ENCODE measurements at regions of chr13 and their contacts with region 1.

Region 1: GRCh38 chr13:33017323-33017929 is 1.2 kb downstream of the KL start:
- DNase-seq: peak; percentile 65
- ATAC-seq: peak; percentile 88
- H3K4me3 ChIP-seq: peak overlapping the region; percentile 69
- H3K27ac ChIP-seq: no peak overlapping the region
- H3K4me1 ChIP-seq: peaks cover 12% of the 10 kb centered on the region
- H3K27me3 ChIP-seq: peaks cover 0 to 6% of the 10 kb centered on the region in 2 experiments; a peak in 1 of 4 replicates
- CTCF ChIP-seq: peak; percentile 66 to 82 (median 74); a peak in 5 of 6 replicates
- EP300 ChIP-seq: peak in 1 of 2 experiments; percentile 24; a peak in 1 of 4 replicates
- POLR2A ChIP-seq: no peak
- RAD21 ChIP-seq: peak; percentile 83

Region 2: GRCh38 chr13:32824671-32825070 is 192.8 kb before region 1 on chr13:
- CTCF ChIA-PET with region 1: interaction called, 4 read pairs
- POLR2A ChIA-PET with region 1: no interaction called
- RAD21 ChIA-PET with region 1: interaction called, 4 read pairs
- SMC1A ChIA-PET with region 1: no interaction called
- in situ Hi-C with region 1: no loop called
- intact Hi-C with region 1: loop called (anchors 1 kb)
- DNase-seq: no peak
- ATAC-seq: no peak
- H3K4me3 ChIP-seq: no peak overlapping the region
- H3K27ac ChIP-seq: no peak overlapping the region
- H3K4me1 ChIP-seq: peaks cover 12% of the 10 kb centered on the region
- H3K27me3 ChIP-seq: no peaks in the 10 kb centered on the region
- CTCF ChIP-seq: no peak
- EP300 ChIP-seq: no peak
- POLR2A ChIP-seq: no peak
- RAD21 ChIP-seq: no peak

Region 3: GRCh38 chr13:32838945-32839344 is 178.5 kb before region 1 on chr13:
- CTCF ChIA-PET with region 1: no interaction called
- POLR2A ChIA-PET with region 1: no interaction called
- RAD21 ChIA-PET with region 1: interaction called, 4 read pairs
- SMC1A ChIA-PET with region 1: interaction called, 4 read pairs
- in situ Hi-C with region 1: no loop called
- intact Hi-C with region 1: loop called (anchors 1 kb)
- DNase-seq: no peak
- ATAC-seq: peak; percentile 83
- H3K4me3 ChIP-seq: peak overlapping the region; percentile 14; the same call in 1 of the 2 replicates
- H3K27ac ChIP-seq: peak overlapping the region; percentile 84
- H3K4me1 ChIP-seq: peaks cover 40% of the 10 kb centered on the region
- H3K27me3 ChIP-seq: no peaks in the 10 kb centered on the region
- CTCF ChIP-seq: no peak
- EP300 ChIP-seq: peak; percentile 40 to 71; a peak in 1 of 4 replicates
- POLR2A ChIP-seq: no peak
- RAD21 ChIP-seq: 0 out of 2 replicates have a peak, but pooled peaks have one; percentile 8

Region 4: DNA sequence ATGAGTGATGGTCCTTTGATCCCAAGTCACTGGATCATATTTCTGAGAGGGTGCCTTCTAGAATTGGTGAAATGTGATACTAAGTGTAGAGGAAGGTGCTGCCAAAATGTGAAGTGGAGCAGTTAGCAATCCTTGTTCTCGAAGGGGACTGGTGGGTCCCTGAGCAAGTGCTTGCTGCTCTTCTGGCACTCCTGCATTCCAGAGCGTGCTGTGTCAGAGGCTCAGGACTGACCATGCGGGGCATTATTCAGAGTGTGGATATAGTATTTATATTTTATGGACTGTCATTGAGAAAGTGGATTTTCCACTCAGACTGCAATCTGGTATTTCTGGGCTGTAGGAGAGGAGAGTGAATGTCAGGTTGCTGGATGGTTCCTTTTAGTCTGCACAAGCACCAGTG is 153.8 kb before region 1 on chr13:
- CTCF ChIA-PET with region 1: no interaction called
- POLR2A ChIA-PET with region 1: no interaction called
- RAD21 ChIA-PET with region 1: no interaction called
- SMC1A ChIA-PET with region 1: no interaction called
- in situ Hi-C with region 1: no loop called
- intact Hi-C with region 1: no loop called
- DNase-seq: no peak
- ATAC-seq: no peak
- H3K4me3 ChIP-seq: no peak overlapping the region
- H3K27ac ChIP-seq: no peak overlapping the region
- H3K4me1 ChIP-seq: no peaks in the 10 kb centered on the region
- H3K27me3 ChIP-seq: no peaks in the 10 kb centered on the region
- CTCF ChIP-seq: no peak
- EP300 ChIP-seq: no peak
- POLR2A ChIP-seq: no peak
- RAD21 ChIP-seq: no peak